CD4-positive, alpha-beta T cell (primary cell): ENCODE measurements at regions of chr3 and their contacts with region 1.

Region 1: DNA sequence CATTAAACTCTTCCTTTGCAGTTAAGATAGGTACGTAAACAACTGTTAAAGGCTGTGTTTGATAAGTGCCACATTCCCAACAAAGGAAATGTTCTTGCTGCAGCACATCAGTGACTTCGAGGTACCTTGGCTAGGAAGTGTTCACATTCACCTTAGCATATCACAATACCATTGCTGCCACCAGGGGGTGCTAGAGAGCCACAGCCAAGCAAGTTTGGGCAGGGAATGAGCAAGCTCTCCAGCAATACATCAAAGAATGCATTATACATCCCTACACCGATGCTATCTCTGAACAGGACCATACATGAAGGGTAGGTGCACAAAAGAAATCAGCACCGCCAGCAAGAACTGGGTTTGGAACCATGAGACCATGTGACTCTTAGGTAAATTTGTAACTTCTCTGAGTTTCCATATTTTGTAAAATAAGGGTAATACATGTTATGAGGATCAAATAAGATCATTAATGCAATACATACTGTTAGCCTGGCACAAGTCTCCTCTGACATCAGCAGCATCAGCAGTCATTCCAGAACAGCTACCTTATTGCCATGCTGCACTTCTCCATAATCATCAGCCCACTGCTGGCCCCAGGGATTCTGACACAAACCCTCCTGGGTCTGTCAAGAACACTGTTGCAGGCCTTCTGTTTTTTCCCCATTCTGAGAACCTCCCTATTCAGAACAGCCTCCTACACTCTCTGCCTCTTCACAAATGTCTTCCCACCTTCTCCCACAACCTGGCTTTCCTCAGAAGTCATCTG is 37.6 kb downstream of the RYK start:
- DNase-seq: peak; percentile 73 to 94 (median 84)
- ATAC-seq: peak; percentile 83
- H3K4me3 ChIP-seq: no peak overlapping the region
- H3K4me3 Mint-ChIP-seq: no peak overlapping the region
- H3K27ac ChIP-seq: no peak overlapping the region
- H3K27ac Mint-ChIP-seq: peak overlapping the region; percentile 19
- H3K4me1 ChIP-seq: no peaks in the 10 kb centered on the region
- H3K4me1 Mint-ChIP-seq: peaks cover 36% of the 10 kb centered on the region
- H3K27me3 ChIP-seq: no peaks in the 10 kb centered on the region
- H3K27me3 Mint-ChIP-seq: no peaks in the 10 kb centered on the region
- CTCF ChIP-seq: peak; percentile 99

Region 2: DNA sequence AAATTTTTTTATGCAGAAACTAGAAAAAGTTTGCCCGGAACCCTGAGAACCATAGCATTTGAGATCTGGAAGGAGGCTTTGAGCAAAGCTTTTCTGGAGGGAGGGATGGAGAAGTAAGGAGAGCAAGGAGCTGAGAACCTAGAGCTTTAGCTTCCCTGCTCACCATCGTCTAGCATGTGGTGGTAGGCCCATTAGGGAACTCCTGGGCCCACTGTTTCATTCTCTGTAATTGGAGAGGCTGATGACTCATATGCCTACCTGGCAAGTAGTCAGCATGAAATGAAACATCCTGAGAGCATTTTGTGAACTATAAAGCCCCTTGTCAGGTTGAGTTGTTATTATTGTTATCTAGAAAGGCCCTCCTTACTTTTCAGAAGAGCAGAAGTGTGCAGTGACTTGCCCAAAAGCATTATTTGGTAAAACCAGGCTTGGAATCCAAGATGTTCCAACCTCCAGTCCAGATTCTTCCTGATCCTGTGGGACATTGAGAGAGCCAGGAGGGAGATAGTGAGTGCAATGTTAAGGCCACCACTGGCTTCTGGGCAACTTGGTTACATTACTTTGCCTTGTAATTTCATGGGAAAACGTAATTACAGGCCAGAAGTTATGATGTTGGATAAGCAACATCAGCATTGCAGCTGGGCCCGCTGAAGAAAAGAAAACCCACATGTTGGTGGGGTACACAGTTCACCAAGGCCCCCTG is 917.7 kb before region 1 on chr3:
- CTCF ChIA-PET with region 1: no interaction called
- POLR2A ChIA-PET with region 1: no interaction called
- intact Hi-C with region 1: no loop called
- DNase-seq: no peak
- ATAC-seq: no peak
- H3K4me3 ChIP-seq: no peak overlapping the region
- H3K4me3 Mint-ChIP-seq: no peak overlapping the region
- H3K27ac ChIP-seq: no peak overlapping the region
- H3K27ac Mint-ChIP-seq: no peak overlapping the region
- H3K4me1 ChIP-seq: no peaks in the 10 kb centered on the region
- H3K4me1 Mint-ChIP-seq: no peaks in the 10 kb centered on the region
- H3K27me3 ChIP-seq: no peaks in the 10 kb centered on the region
- H3K27me3 Mint-ChIP-seq: peaks cover 6% of the 10 kb centered on the region
- CTCF ChIP-seq: no peak

Region 3: DNA sequence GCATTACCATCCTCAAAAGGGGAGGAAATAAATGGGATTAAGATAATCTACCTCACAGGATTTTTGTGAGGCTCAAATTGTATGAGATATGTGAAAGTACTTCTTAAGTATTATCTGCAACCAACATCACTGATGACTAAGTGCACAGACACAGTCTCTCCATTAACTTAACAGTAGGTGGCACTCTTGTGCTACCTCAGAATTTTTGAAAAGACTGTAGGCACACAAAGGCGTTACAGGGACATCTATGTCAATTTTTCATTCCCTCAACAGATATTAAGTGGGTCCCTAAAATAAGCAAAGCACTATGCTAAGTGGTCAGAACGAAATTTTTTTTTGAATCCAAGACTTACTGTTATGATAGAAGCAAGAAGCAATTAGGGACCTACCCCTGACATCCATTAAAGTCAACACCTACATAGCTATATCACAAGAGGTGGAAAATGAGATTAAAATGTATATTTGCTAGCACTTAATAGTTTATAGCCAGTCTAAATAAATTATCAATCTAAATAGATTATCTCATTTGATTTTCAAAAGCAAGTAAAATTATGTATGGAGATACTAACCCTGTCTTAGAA is 15.3 kb before region 1 on chr3:
- CTCF ChIA-PET with region 1: interaction called, 14 read pairs
- POLR2A ChIA-PET with region 1: no interaction called
- intact Hi-C with region 1: no loop called
- DNase-seq: peak in 3 of 14 experiments; percentile 53 to 64 (median 63)
- ATAC-seq: peak; percentile 77
- H3K4me3 ChIP-seq: no peak overlapping the region
- H3K4me3 Mint-ChIP-seq: no peak overlapping the region
- H3K27ac ChIP-seq: no peak overlapping the region
- H3K27ac Mint-ChIP-seq: no peak overlapping the region
- H3K4me1 ChIP-seq: no peaks in the 10 kb centered on the region
- H3K4me1 Mint-ChIP-seq: peaks cover 6% of the 10 kb centered on the region
- H3K27me3 ChIP-seq: no peaks in the 10 kb centered on the region
- H3K27me3 Mint-ChIP-seq: no peaks in the 10 kb centered on the region
- CTCF ChIP-seq: peak; percentile 78

Region 4: DNA sequence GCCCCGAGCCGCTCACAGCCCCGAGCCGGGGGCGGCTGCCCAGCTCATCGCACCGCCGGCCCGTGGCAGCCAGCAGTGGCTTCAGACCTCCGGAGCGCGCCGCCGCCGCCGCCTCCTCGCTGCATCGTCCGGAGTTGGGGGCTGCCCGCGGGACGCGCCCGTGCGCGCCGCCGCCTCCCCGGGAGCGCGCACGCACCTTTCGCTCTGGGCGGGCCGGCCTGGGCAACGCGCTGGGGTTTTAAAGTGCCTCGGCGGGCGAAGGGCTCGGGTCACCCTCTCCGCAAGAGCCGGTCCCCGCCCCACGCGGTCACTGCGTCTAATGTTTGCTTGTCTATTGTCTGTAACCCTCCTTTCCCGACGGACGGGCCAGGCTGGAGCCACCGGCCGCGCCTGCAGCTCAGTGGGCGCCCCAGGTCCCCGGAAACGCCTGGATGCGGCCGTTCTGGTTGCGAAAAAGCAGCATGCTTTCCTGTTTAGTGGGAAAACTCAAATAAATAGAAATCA is 37.7 kb after region 1 on chr3 and contains the start of gene RYK:
- CTCF ChIA-PET with region 1: interaction called, 12 read pairs
- POLR2A ChIA-PET with region 1: interaction called, 4 read pairs
- intact Hi-C with region 1: loop called in 1 of 2 experiments (anchors 5 kb)
- DNase-seq: peak; percentile 38 to 90 (median 67)
- ATAC-seq: peak; percentile 63
- H3K4me3 ChIP-seq: peak within 1 kb of the TSS; percentile 87
- H3K4me3 Mint-ChIP-seq: peak within 1 kb of the TSS; percentile 98
- H3K27ac ChIP-seq: peak within 1 kb of the TSS; percentile 58 to 77
- H3K27ac Mint-ChIP-seq: peak within 1 kb of the TSS; percentile 96
- H3K4me1 ChIP-seq: peaks cover 15% of the 10 kb centered on the region
- H3K4me1 Mint-ChIP-seq: peaks cover 61% of the 10 kb centered on the region
- H3K27me3 ChIP-seq: no peaks in the 10 kb centered on the region
- H3K27me3 Mint-ChIP-seq: no peaks in the 10 kb centered on the region
- CTCF ChIP-seq: no peak
- total RNA-seq, gene RYK: 57.6 to 59.2 TPM

Region 5: DNA sequence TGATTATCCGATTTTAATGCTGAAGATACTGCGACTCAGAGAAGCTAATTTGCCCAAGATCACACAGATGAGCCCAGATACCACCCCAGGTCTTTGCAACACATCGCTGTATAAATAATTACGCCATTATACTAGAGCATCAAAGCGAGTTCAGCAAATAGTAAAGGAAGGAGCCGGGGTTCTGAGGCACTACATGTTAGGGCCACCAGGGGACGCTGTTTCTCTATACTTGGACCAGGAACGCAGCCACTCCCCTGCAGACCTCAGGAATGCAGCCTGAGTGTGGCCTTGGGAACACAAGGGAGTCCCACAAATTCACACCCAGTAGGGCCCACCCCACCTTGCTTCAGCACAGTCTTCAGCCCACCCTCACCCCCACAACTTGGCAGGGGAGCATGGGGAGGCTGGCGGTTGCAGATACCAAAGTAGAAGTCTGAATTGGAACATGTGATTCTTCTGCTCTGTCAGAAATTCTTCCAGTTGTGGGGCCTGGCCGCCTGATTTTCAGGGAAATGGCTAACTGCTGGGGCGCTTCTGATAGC is 95.3 kb after region 1 on chr3:
- CTCF ChIA-PET with region 1: interaction called, 4 read pairs
- POLR2A ChIA-PET with region 1: no interaction called
- intact Hi-C with region 1: loop called in 1 of 2 experiments (anchors 2 kb)
- DNase-seq: peak; percentile 53 to 86 (median 71)
- ATAC-seq: peak; percentile 96
- H3K4me3 ChIP-seq: no peak overlapping the region
- H3K4me3 Mint-ChIP-seq: no peak overlapping the region
- H3K27ac ChIP-seq: no peak overlapping the region
- H3K27ac Mint-ChIP-seq: no peak overlapping the region
- H3K4me1 ChIP-seq: peaks cover 14% of the 10 kb centered on the region
- H3K4me1 Mint-ChIP-seq: peaks cover 5% of the 10 kb centered on the region
- H3K27me3 ChIP-seq: peaks cover 8 to 12% of the 10 kb centered on the region in 2 experiments
- H3K27me3 Mint-ChIP-seq: peaks cover 35% of the 10 kb centered on the region
- CTCF ChIP-seq: peak; percentile 98

Region 6: DNA sequence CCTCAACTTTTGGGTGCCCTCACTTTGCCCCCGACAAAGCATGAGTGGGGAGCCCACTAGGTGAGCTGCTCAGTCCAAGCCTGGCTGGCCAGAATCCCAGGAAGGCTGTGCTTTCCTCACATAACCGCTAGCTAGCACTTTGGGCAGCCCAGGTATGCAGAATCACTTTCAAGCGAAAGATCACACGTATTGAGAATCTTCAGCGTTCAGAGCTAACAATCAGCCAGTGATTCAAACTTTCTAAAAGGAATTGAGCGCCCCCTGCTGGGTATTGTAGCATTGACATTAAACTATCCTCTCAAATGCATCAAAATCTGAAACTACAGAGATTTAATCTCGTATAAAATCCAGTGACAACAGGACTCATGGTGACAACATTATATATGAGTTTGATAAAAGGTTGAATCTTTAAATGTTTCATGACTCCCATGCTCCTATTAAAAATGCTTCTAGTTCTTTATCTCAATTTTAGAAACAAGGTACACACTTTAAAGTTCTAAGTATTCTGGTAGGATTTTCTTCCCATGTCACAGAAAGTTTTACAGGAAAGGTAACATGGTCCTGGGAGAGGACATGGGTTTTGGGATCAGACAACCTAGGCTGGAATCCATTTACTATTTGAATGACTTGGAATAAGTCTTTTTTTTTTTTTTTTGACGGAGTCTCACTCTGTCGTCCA is 260.9 kb after region 1 on chr3:
- CTCF ChIA-PET with region 1: interaction called, 35 read pairs
- POLR2A ChIA-PET with region 1: interaction called, 3 read pairs
- intact Hi-C with region 1: loop called (anchors 1 kb)
- DNase-seq: peak; percentile 45 to 89 (median 72)
- ATAC-seq: peak; percentile 85
- H3K4me3 ChIP-seq: no peak overlapping the region
- H3K4me3 Mint-ChIP-seq: no peak overlapping the region
- H3K27ac ChIP-seq: no peak overlapping the region
- H3K27ac Mint-ChIP-seq: no peak overlapping the region
- H3K4me1 ChIP-seq: peaks cover 4% of the 10 kb centered on the region
- H3K4me1 Mint-ChIP-seq: peaks cover 7% of the 10 kb centered on the region
- H3K27me3 ChIP-seq: no peaks in the 10 kb centered on the region
- H3K27me3 Mint-ChIP-seq: no peaks in the 10 kb centered on the region
- CTCF ChIP-seq: peak; percentile 92

Region 7: DNA sequence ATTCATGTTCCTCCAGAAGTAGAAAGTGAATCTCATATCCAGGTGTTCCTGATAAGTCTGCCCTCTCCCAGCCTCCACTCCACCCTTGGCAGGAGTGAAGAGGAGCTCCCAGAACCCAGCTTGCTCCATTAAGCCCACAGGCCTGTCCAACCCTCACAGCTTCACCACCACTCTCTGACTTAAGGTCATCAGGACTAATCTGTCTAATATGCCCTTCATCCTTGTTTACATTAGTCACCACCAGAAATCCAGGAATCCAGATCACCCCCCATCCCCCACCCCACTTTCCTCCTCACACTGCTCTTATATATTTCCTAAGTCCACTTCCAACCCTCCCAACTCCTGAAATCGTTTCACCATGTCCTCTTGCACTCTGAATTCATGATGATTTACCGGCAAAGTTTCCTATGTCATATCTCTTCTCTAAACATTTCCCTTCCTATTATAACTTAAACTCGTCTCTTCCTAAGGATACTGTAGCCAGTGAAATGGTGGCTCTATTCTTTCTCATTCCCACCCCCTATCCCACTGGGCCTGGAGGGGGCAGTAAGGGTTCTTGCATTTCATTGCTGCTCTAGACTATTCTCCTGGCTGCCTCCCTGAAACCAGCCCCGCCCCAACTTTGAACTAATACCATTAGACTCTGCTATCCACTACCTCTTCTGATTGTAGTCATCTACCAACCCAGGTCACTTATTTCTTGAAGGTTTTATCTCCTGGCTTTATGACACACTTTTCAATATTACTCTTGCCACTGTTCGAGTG is 1795.8 kb after region 1 on chr3:
- CTCF ChIA-PET with region 1: no interaction called
- POLR2A ChIA-PET with region 1: no interaction called
- intact Hi-C with region 1: no loop called
- DNase-seq: no peak
- ATAC-seq: no peak
- H3K4me3 ChIP-seq: no peak overlapping the region
- H3K4me3 Mint-ChIP-seq: no peak overlapping the region
- H3K27ac ChIP-seq: no peak overlapping the region
- H3K27ac Mint-ChIP-seq: no peak overlapping the region
- H3K4me1 ChIP-seq: no peaks in the 10 kb centered on the region
- H3K4me1 Mint-ChIP-seq: no peaks in the 10 kb centered on the region
- H3K27me3 ChIP-seq: no peaks in the 10 kb centered on the region
- H3K27me3 Mint-ChIP-seq: peaks cover 11% of the 10 kb centered on the region
- CTCF ChIP-seq: no peak